AG04449 (cell line): ENCODE measurements at regions of chr17 and their contacts with region 1.

Region 1: DNA sequence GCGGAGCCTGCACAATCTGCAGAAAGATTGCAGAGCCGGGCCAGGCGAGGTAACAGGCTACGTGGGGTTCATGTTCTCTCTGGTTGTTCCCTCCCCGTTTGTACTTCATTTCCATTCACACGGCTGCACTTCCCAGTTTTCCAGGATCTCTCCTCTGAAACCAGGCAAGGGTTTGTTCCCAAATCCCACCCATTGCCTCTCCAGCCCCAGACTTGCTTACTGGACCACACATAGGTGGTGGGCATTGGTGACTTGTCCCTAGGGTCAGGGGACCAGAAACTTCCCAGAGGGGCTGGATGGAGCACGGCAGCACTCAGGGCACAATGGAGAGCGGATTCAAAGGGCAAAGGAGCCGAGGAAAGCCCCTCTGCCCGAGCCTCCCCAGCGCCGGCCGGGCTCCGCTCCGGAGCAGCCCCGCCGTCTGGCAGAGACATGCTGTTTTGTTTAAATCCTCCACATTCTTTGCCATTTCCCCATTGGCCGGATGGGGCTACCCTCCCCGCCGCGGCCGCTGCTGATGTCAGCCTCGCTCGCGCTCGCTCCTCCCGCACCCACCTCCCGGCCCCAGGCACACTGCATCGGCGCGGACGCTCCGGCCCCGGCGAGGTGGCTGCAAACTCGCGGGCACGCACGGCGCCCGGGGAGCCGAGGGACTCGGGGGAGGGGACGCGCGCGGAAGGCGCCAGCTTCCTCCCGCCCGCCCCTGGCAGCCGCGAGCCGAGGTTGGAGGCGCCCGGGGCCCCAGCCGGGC is at the start of gene PITPNC1:
- DNase-seq: no peak
- H3K4me3 ChIP-seq: peak within 1 kb of the TSS; percentile 75
- CTCF ChIP-seq: peak; percentile 1

Region 2: GRCh38 chr17:67366193-67367157 is 10.4 kb before region 1 on chr17 and contains the start of gene PSMD12:
- CTCF ChIA-PET with region 1: interaction called, 97 read pairs
- POLR2A ChIA-PET with region 1: interaction called, 3 read pairs
- DNase-seq: peak; percentile 47
- H3K4me3 ChIP-seq: peak within 1 kb of the TSS; percentile 97
- CTCF ChIP-seq: no peak

Region 3: GRCh38 chr17:67406912-67407311 is 30.0 kb after region 1 on chr17:
- CTCF ChIA-PET with region 1: interaction called, 13 read pairs
- POLR2A ChIA-PET with region 1: no interaction called
- DNase-seq: no peak
- H3K4me3 ChIP-seq: no peak overlapping the region
- CTCF ChIP-seq: no peak

Region 4: GRCh38 chr17:67481808-67482207 is 104.9 kb after region 1 on chr17:
- CTCF ChIA-PET with region 1: interaction called, 129 read pairs
- POLR2A ChIA-PET with region 1: no interaction called
- DNase-seq: no peak
- H3K4me3 ChIP-seq: no peak overlapping the region
- CTCF ChIP-seq: no peak

Region 5: GRCh38 chr17:67503184-67503583 is 126.3 kb after region 1 on chr17:
- CTCF ChIA-PET with region 1: no interaction called
- POLR2A ChIA-PET with region 1: no interaction called
- DNase-seq: no peak
- H3K4me3 ChIP-seq: no peak overlapping the region
- CTCF ChIP-seq: no peak

Region 6: GRCh38 chr17:67602956-67603355 is 226.0 kb after region 1 on chr17:
- CTCF ChIA-PET with region 1: interaction called, 83 read pairs
- POLR2A ChIA-PET with region 1: no interaction called
- DNase-seq: no peak
- H3K4me3 ChIP-seq: no peak overlapping the region
- CTCF ChIP-seq: peak; percentile 41

Region 7: GRCh38 chr17:67629971-67630320 is 253.0 kb after region 1 on chr17:
- CTCF ChIA-PET with region 1: interaction called, 164 read pairs
- POLR2A ChIA-PET with region 1: no interaction called
- DNase-seq: peak; percentile 26
- H3K4me3 ChIP-seq: no peak overlapping the region
- CTCF ChIP-seq: peak; percentile 59

Region 8: DNA sequence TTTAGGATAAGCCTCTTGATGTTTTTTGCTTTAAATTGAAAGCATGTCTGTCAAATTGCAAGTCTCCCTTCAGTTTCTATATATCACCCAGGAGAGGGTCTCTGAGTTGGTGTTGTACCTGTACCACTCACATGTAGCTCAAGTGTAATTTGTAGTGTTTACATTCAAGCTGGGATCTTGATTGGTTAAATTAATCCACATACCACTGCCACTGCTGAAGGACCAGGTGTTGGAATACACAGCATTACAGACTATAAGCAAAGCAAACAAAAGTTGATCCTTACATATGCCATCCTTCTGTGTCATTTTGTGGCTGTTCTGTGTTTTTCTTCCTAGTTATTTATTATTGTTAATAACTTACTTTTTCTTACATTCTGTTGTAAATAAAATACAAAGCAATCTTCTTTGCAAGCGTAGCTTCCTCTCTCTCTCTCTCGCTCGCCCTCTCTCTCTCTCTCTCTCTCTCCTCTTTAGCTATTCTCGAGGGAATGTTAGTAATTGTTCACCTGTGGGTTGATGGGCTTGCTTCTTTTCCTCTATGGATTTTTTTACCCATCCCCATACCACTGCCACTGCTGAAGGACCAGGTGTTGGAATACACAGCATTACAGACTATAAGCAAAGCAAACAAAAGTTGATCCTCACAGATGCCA is 320.1 kb after region 1 on chr17:
- CTCF ChIA-PET with region 1: interaction called, 59 read pairs
- POLR2A ChIA-PET with region 1: no interaction called
- DNase-seq: no peak
- H3K4me3 ChIP-seq: no peak overlapping the region
- CTCF ChIP-seq: no peak